Left colon (tissue), 2 donors: ENCODE measurements at regions of chr7 and their contacts with region 1.

Region 1: DNA sequence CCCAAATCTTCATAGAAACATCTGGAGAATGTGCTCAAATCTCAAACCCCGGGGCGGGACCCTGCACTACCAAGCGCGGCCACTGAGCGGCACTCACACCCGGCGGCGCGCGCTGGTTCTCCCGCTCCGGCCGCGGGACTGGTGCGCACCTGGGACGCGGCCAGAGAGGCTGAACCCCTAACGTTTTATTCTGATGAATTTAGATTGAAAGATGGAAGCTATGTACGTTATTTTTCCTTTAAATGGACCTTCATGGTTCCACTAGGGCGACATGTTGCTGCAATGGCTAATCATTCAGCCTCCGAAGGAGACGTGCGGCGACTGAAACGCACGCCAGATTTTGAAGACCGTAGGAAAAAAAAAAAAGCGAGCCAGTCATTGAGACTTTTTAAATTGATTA is 107.0 kb upstream of the INSIG1 start:
- DNase-seq: peak; percentile 17 to 61
- ATAC-seq: peak; percentile 76

Region 2: DNA sequence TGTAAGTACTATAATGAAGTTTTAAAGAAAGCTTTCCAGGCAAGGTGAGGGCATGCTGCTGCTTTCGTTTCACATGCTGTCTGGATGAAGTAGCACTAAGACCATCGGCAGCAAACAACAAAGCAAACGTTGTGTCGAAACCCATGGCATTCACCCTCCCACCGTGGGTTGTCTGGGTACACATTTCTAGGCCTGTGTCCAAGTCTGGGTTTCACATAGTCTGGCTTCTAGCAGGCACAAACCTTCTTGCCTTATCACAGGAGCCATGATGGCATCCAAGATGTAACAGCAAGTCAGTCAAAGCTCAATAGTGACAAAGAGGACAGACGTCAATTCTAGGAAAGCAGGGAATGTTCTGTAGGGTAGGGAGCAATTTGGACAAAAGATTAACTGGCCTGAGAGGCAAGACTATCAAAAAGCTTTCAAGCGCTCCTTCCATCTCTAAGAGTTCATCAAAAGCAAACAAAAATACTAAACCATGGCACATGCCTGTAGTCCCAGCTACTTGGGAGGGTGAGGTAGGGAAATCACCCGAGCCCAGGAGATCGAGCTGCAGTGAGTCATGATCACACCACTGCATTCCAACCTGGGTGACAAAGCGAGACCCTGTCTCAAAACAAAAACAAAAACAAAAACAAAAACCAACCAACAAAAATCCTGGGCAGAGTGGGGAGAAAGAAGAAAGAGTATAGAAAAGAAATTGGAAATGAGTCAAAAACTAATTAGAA is 230.5 kb before region 1 on chr7:
- intact Hi-C with region 1: no loop called
- DNase-seq: no peak
- ATAC-seq: no peak

Region 3: GRCh38 chr7:155003376-155004214 is 187.1 kb before region 1 on chr7:
- intact Hi-C with region 1: no loop called
- DNase-seq: peak; percentile 59 to 81
- ATAC-seq: peak; percentile 94

Region 4: DNA sequence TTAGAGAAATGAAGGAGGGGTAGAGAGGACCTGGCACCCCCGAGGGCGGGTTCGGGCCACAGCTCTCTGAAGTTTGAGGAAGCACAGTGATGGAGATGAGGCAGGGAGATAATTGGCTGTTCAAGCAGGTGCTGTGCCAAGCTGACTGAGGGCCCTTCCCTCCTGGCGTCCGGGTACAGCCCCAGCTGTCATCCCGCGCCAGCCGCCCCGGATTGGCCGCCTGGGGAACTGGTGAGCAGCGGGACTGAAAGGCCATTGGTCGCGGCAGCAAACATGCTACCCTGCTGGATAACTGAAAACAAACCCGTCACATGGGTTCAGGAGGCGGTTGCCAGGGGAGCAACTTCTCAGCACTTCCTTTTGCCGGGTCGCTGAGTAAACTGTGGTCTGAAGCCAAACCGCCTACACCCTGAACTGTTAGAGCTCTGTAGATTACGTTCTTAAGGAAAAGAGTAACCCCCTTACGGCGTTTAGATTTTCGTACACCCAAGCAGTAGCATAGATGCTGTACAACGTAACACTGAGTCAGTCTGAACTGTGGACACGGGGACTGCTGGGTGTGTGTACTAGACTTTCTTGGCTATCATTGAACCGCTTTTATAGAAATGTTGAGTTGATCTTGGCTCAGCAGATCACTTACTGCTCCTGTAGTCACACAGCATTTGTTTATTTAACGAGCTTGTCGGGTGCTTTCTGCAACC is 108.3 kb after region 1 on chr7:
- intact Hi-C with region 1: loop called in 1 of 2 experiments (anchors 10 kb)
- DNase-seq: peak; percentile 95 to 97
- ATAC-seq: peak; percentile 78

Region 5: DNA sequence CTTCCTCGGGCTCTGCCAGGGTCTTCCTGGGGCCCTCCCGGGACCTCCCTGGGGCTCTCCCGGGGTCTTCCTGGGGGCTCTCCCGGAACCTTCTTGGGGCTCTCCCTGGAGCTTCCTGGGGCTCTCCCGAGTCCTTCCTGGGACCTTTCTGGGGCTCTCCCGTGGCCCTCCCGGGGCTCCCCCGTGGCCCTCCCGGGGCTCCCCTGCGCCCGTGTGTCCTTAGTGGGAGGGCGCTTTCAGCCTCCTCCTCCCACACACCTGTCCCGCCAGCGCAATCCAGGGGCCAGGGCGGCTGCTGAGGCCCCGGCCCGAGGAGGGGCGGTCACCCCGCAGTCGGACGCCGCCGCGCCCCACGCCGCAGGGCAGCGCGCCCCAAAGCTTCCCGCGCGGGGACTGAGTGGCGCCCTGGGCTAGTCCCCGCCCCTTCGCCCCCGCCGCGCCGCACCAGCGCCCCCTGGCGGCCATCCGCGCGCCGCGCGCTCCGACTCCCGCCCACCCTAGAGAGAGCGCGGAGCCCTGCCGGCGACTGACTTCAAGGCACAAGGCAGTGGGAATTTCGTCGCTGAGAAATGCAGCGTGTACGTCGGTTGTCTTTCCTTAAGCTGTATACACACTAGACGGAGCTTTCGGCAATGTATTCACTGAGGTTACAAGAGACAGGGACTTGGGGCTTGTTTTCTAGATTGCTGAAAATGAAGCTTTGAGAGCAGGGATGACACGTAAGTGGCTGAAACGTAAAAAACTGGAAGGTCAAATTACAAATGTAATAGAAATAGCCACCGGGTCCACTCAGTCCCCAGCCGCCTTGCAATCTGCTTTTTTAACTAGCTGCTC is 154.1 kb after region 1 on chr7:
- intact Hi-C with region 1: loop called (anchors 2 to 10 kb)
- DNase-seq: peak in 1 of 2 donors; percentile 78
- ATAC-seq: peak; percentile 96

Region 6: GRCh38 chr7:155392726-155393570 is 202.3 kb after region 1 on chr7:
- intact Hi-C with region 1: no loop called
- DNase-seq: no peak
- ATAC-seq: no peak